AG04450 (cell line): ENCODE measurements at regions of chr1 and their contacts with region 1.

Region 1: DNA sequence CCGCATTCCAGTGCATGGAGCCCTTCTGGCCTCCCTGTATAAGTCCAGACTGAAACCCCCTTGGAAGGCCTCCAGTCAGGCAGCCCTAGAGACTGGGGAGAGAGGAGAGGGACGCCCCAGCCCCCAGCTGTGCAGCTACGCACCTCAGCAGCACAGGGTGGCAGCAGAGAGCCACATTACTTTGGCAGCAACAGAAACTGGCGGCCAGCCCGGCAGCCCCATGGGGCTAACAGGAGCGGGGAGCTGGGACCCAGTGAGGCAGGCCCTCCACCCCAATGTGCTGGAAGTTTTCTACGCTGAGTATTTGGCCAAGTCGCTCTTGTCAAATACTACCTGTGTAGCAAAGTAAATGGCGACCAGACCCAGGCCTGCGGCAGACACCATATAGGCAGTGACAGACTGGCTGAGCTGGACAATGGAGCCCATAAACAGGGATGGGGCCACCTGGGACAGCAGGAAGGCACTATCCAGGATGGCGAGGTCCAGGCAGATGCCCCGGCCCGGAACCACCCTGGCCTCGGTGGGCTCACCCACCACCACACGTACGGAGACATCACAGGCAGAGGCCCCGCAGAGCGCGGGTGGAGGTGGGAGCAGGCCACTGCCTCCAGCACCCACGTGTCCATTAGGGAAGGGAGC is 21.2 kb downstream of the SLC45A3 start:
- DNase-seq: no peak
- H3K4me3 ChIP-seq: no peak overlapping the region
- H3K27ac ChIP-seq: no peak overlapping the region
- H3K27me3 ChIP-seq: no peaks in the 10 kb centered on the region
- CTCF ChIP-seq: peak; percentile 88

Region 2: GRCh38 chr1:205232945-205233397 is 426.1 kb before region 1 on chr1:
- CTCF ChIA-PET with region 1: interaction called, 10 read pairs
- POLR2A ChIA-PET with region 1: no interaction called
- DNase-seq: no peak
- H3K4me3 ChIP-seq: no peak overlapping the region
- H3K27ac ChIP-seq: no peak overlapping the region
- H3K27me3 ChIP-seq: no peaks in the 10 kb centered on the region
- CTCF ChIP-seq: no peak

Region 3: DNA sequence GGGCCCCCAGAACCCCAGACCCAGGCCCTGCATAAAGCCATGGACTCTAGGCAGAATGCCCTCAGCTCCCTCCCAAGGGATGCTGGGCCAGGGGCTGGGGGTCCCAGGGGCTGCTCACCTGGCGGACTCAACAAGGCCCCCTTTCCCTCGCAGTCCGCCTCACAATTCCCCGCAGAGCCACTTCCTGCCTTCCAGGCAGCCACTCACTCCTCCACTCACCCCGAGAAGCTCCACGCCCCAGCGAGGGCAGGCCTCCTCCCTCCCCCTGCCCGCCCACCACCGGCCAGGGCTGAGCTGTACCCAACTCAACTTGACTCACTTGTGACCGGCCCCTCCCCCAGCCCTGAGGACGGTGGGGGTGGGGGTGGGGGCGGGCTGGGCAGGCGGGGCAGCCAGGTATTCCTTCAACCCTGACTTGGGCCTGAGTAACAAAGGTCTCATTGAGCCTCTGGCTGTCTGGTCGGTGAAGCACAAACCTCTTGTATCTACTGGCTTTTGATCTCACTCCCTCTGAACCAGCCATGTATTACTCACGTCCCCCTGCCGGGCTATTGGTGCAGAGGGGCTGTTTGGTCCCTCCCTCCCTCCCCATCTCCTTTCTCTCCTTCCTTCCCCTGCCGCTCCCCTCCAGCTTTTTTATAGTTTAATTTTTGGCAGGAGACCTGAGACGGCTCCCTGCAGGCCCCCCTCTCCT is 209.2 kb before region 1 on chr1:
- CTCF ChIA-PET with region 1: no interaction called
- POLR2A ChIA-PET with region 1: no interaction called
- DNase-seq: no peak
- H3K4me3 ChIP-seq: peak overlapping the region; percentile 44
- H3K27ac ChIP-seq: no peak overlapping the region
- H3K27me3 ChIP-seq: peaks cover 43% of the 10 kb centered on the region
- CTCF ChIP-seq: peak; percentile 9; the same call in 1 of the 2 replicates

Region 4: DNA sequence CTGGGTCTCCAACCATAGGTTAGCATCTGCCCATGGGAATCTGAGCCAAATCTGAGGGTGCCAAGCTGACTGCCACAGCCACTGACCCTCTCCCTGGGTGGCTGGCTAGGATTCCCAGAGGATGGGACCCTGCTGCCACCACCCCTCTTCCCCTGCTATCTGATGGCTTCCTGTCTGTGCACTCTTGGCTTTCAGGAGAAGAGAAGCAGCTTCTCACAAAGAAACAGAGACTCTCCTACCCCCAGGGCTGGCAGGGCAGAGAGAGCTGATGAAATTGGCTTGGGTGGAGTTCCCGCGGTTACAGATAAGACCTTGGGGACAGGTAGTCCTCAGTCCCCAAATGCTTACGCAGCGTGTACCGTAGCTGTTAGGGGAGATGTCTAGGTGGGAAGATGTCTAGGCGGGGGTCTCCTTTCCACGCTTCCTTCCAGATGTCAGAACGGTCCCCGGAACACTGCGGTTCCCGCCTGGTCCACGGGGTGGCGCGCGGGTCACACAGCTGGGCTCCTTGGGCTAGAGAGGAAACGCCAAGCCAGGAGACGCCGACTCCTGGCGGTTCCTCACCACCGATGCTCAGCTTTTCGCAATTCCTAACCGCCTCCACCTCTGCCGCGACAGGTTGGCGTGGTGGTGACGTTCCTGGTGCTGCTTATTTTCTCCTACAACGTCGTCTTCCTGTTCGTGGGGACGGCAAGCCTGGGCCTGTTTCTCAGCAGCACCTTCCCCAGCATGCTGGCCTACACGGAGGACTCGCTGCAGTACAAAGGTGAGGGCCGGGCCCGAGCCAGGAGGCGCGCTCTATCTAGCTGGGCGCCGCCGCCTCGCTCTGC is 67.3 kb before region 1 on chr1:
- CTCF ChIA-PET with region 1: interaction called, 489 read pairs
- POLR2A ChIA-PET with region 1: interaction called, 5 read pairs
- DNase-seq: no peak
- H3K4me3 ChIP-seq: peak overlapping the region; percentile 55
- H3K27ac ChIP-seq: no peak overlapping the region
- H3K27me3 ChIP-seq: no peaks in the 10 kb centered on the region
- CTCF ChIP-seq: peak; percentile 99

Region 5: DNA sequence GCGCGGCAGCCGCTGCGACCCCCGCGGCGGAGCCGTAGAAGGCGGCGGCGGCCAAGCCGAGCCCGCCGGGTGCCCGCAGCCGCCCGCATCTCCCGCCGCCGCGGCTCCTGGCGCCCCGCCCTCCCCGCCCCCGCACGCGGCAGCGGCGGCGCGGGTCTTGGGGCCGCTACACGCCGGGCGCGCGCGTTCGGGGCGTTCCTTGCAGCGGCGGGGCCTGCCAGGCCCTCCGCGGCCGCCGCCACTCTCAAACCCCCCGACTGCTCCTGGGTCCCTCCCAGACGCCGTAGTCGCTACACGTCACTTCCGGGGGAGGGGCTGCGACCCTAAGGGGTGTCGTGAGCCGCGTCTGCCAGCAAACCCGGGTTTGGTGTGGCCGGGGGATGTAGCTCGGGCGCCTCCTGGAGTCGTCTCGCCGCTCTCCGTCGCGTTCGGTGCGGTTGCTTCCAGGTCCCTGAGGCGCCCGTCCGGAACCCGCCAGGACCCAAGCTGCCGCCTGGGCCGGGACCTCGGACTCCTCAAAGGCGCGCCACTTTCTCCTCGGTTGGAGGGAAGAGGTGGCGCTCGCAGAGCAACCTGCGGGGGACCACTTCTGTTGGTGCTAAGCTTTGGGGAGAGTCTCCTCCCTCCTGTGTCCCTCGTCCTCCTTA is 27.2 kb before region 1 on chr1 and contains the start of gene ELK4:
- CTCF ChIA-PET with region 1: interaction called, 36 read pairs
- POLR2A ChIA-PET with region 1: interaction called, 9 read pairs
- DNase-seq: peak; percentile 94
- H3K4me3 ChIP-seq: peak within 1 kb of the TSS; percentile 79
- H3K27ac ChIP-seq: peak within 1 kb of the TSS; percentile 97
- H3K27me3 ChIP-seq: no peaks in the 10 kb centered on the region
- CTCF ChIP-seq: peak; percentile 66
- polyA plus RNA-seq, gene ELK4: 8.3 and 8.6 TPM in 2 replicates

Region 6: DNA sequence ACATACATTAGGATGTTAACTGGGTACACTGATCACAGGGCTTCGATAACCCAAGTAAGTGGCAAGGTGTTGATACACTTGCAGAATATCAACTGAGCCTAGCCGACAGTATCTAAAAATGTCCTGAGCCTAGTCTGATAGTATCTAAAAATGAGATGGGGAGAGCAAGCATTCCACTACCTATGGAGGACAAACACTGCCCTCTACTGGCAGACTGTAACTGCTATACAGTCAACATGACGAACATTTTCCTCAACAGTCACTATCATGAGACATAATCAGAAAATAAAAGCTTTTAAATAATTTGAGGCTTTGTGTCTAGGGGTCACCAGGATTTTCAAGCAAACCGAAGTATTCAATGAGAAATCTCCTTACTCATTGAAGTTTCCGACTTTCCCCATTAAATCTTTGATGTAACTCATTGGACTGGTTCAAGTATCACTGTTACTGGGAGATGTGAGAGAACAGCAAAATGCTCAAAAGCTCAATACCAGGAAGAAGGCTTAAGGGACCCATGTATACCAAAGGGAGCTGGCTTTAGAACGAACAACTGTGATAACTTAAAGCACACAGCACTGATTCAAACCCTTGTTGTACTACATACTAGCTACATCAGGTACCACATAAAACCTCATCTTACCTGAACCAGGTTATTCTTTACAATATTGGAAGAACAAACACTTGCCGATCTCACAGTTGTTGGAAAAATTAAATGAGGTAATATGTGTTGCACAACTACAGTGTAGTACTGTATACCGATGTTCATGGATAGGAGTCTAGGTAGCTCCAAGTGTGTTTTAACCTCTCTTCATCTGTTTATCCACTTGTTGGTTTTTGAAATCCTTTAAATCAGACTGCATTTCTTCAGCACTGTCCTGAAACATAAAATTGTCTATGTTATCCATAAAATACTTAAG is 52.3 kb after region 1 on chr1:
- CTCF ChIA-PET with region 1: interaction called, 339 read pairs
- POLR2A ChIA-PET with region 1: interaction called, 4 read pairs
- DNase-seq: peak; percentile 66
- H3K4me3 ChIP-seq: no peak overlapping the region
- H3K27ac ChIP-seq: no peak overlapping the region
- H3K27me3 ChIP-seq: no peaks in the 10 kb centered on the region
- CTCF ChIP-seq: peak; percentile 90

Region 7: GRCh38 chr1:205919026-205919746 is 260.1 kb after region 1 on chr1:
- CTCF ChIA-PET with region 1: interaction called, 11 read pairs
- POLR2A ChIA-PET with region 1: no interaction called
- DNase-seq: peak; percentile 60
- H3K4me3 ChIP-seq: no peak overlapping the region
- H3K27ac ChIP-seq: no peak overlapping the region
- H3K27me3 ChIP-seq: peaks cover 9% of the 10 kb centered on the region
- CTCF ChIP-seq: peak; percentile 93